ENCODE measurements at regions of chr2 and their contacts with region 1.

Region 1: DNA sequence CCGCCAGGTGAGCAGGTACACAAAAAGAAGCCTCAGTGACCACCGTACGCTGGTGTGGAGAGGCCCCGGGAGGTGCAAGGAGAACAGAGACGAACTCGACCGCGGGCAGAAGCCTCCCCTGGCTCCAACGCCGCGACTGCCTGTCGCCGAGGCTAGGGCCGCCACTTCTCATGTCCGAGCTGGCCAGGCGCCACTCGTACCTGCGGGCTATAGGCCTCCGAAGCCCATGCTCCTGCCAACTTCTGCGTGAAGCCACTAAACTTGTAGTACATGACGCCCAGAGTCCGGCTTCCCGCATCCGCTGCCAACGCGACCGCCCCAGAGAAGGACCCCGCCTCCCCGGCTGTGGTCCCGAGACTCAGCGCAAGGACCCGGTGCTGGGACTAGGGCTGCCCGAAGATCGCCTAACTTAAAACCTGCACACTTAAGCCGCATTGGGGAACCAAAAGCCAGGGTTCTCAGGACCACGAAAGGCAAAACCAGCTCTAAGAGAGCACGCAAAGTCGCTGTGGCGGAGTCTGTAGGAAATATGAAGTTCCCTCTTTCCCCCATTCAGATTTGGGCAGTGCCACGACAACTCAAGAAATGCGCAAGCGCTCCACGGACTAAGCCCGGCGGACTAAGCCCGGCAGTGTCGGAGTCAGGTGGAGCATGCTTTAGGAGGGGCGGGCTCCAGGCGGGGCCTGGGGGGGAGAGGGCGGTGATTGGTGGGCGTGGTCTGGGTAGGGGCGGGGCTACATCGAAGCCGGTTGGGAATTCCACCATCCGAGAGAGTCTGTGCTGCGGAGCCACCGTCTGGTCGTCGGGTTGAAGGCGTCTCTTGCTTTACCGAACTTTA is at the start of gene COX7A2L:
- DNase-seq: peak; percentile 91
- H3K4me3 Mint-ChIP-seq: peak within 1 kb of the TSS; percentile 84
- H3K27ac Mint-ChIP-seq: peak within 1 kb of the TSS; percentile 96
- H3K4me1 Mint-ChIP-seq: peaks cover 35% of the 10 kb centered on the region
- H3K27me3 Mint-ChIP-seq: peaks cover 2% of the 10 kb centered on the region
- total RNA-seq, gene COX7A2L: 73.4 and 79.8 TPM in 2 replicates

Region 2: DNA sequence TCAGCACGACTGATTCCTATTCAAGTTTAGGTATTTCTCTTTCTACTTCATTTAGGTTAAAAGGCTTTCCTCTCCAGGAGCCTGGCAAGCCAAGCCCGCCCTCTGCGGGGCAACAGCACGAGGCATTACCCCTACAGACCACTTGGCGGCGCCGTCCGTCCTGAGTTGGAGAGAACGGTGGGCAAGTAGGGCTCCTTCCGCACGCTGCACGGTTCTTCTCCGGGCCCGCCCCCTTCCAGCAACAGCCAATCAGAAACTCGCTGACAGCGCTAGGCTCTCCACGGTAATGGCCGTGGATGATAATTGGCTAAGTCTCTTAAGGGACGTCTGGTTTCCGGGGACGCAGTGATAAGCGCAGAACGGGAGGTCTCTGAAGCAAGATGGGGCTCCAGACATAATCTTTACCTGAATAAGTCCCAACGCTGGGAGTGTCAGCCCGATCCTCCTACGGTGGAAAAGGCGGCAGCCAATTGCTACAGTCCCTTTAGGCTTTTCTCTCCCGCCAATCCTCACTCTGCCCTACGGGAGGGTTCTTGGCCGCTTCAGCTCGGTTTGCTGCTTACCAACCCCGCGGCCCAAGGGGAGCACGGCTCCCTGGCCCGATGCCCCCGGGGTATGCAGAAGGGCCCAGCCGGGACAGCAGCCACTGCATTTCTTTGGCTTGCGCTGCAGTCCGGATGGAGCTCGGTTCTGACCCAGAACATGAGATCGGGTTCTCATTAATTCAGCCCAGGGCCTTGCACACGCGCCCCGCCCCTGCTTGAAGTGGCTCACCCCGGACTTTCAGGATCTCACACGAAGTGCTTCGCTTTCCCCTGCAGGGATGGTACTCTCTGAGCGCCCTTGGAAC is 520.2 kb before region 1 on chr2:
- intact Hi-C with region 1: loop called (anchors 2 kb)
- DNase-seq: peak; percentile 96
- H3K4me3 Mint-ChIP-seq: peak overlapping the region; percentile 88
- H3K27ac Mint-ChIP-seq: peak overlapping the region; percentile 74
- H3K4me1 Mint-ChIP-seq: peaks cover 5% of the 10 kb centered on the region
- H3K27me3 Mint-ChIP-seq: peaks cover 9% of the 10 kb centered on the region

Region 3: DNA sequence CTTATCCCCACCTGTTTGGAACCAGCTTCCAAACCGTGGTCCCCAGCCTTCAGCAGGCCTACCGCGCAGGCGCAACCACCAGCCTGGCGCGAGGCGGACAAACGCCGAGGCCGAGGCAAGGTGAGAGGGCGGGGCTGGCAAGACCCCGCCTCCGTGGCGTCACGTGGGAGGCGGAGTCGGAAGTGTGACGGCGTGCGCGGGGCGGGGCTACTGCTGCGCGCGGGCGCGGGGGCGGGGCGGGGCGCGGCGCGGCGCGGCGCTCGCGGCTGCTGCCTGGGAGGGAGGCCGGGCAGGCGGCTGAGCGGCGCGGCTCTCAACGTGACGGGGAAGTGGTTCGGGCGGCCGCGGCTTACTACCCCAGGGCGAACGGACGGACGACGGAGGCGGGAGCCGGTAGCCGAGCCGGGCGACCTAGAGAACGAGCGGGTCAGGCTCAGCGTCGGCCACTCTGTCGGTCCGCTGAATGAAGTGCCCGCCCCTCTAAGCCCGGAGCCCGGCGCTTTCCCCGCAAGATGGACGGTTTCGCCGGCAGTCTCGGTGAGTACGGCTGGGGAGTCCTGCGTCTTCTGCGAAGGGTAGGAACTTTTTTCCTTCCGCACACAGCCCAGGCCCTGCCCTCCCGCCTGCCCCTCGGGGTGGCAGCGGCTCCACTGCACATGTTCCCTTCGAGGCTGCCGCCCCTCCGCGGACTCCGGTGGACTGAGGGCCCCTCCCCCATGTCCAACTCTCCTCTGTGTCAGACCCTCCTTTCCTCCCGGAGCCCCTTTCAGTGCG is 191.8 kb before region 1 on chr2 and contains the start of gene EML4:
- intact Hi-C with region 1: loop called (anchors 2 kb)
- DNase-seq: peak; percentile 87
- H3K4me3 Mint-ChIP-seq: no peak within 1 kb of the TSS
- H3K27ac Mint-ChIP-seq: no peak within 1 kb of the TSS
- H3K4me1 Mint-ChIP-seq: peaks cover 17% of the 10 kb centered on the region
- H3K27me3 Mint-ChIP-seq: peaks cover 10% of the 10 kb centered on the region
- total RNA-seq, gene EML4: 43.0 and 45.2 TPM in 2 replicates

Region 4: GRCh38 chr2:42424033-42424432 is 62.9 kb after region 1 on chr2:
- intact Hi-C with region 1: loop called (anchors 2 kb)
- DNase-seq: no peak
- H3K4me3 Mint-ChIP-seq: no peak overlapping the region
- H3K27ac Mint-ChIP-seq: no peak overlapping the region
- H3K4me1 Mint-ChIP-seq: peaks cover 28% of the 10 kb centered on the region
- H3K27me3 Mint-ChIP-seq: peaks cover 1% of the 10 kb centered on the region

Region 5: GRCh38 chr2:42568401-42569115 is 207.4 kb after region 1 on chr2 and contains the start of gene MTA3:
- intact Hi-C with region 1: loop called (anchors 5 kb)
- DNase-seq: peak; percentile 61
- H3K4me3 Mint-ChIP-seq: peak within 1 kb of the TSS; percentile 98
- H3K27ac Mint-ChIP-seq: peak within 1 kb of the TSS; percentile 98
- H3K4me1 Mint-ChIP-seq: peaks cover 22% of the 10 kb centered on the region
- H3K27me3 Mint-ChIP-seq: no peaks in the 10 kb centered on the region
- total RNA-seq, gene MTA3: 39.7 and 39.8 TPM in 2 replicates